ENCODE measurements at regions of chr14 and their contacts with region 1.

Region 1: DNA sequence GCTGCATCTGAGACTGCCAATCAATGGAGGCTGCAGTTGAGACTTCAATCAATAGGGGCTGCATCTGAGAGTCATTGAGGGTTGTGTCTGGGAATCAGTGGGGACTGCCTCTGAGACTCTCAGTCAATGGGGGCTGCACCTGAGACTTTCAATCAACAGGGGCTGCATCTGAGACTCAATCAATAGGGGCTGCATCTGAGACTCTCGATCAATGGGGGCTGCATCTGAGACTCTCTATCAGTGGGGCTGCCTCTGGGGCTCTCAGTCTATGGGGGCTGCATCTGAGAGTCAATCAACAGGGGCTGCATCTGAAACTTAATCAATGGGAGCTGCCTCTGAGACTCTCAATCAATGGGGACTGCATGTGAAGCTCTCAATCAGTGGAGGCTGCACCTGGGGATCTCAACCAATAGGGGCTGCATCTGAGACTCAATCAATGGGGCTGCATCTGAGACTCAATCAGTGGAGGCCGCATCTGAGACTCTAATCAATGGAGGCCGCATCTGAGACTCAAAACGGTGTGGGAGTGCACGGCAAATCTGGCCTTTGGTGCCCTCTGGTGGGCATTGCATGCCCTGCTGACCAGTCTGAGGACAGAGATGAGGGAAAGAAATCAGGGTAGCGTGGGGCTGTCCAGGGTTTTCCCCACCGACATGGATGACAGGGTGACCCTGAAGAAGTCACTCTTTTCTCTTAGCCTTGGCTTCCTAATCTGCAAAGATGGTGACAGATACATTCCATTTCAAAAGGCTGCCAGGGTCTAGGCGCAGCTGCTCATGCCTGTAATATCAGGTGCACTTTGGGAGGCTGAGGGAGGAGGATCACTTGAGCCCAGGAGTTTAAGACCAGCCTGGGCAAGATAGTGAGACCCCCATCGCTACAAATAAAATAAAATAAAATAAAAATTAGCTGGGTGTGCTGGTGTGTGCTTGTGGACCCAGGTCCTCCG is 41.3 kb upstream of the EIF5 start:
- H3K4me3 Mint-ChIP-seq: no peak overlapping the region
- H3K27ac Mint-ChIP-seq: no peak overlapping the region
- H3K4me1 Mint-ChIP-seq: no peaks in the 10 kb centered on the region
- H3K27me3 Mint-ChIP-seq: peaks cover 41% of the 10 kb centered on the region

Region 2: GRCh38 chr14:102849526-102850379 is 442.9 kb before region 1 on chr14:
- intact Hi-C with region 1: no loop called
- H3K4me3 Mint-ChIP-seq: peak overlapping the region; percentile 52
- H3K27ac Mint-ChIP-seq: peak overlapping the region; percentile 83
- H3K4me1 Mint-ChIP-seq: peaks cover 36% of the 10 kb centered on the region
- H3K27me3 Mint-ChIP-seq: no peaks in the 10 kb centered on the region

Region 3: GRCh38 chr14:103141119-103141796 is 151.4 kb before region 1 on chr14:
- intact Hi-C with region 1: loop called (anchors 2 kb)
- H3K4me3 Mint-ChIP-seq: no peak overlapping the region
- H3K27ac Mint-ChIP-seq: no peak overlapping the region
- H3K4me1 Mint-ChIP-seq: peaks cover 42% of the 10 kb centered on the region
- H3K27me3 Mint-ChIP-seq: peaks cover 34% of the 10 kb centered on the region

Region 4: GRCh38 chr14:103346286-103346685 is 53.6 kb after region 1 on chr14:
- intact Hi-C with region 1: no loop called
- H3K4me3 Mint-ChIP-seq: no peak overlapping the region
- H3K27ac Mint-ChIP-seq: no peak overlapping the region
- H3K4me1 Mint-ChIP-seq: peaks cover 8% of the 10 kb centered on the region
- H3K27me3 Mint-ChIP-seq: no peaks in the 10 kb centered on the region